Activated T-helper 1 cell treated with anti-CD3 and anti-CD28 coated beads, Interleukin-12 subunit alpha, Interleukin-12 subunit beta, Interleukin-2, Interleukin-4 antibody, amounts not matched to agents 30 ng/mL and 10 ng/mL and 1 ng/mL, durations not matched to agents 14 hours and 24 hours and 36 hours (primary cell): ENCODE measurements at regions of chr12 and their contacts with region 1.

Region 1: DNA sequence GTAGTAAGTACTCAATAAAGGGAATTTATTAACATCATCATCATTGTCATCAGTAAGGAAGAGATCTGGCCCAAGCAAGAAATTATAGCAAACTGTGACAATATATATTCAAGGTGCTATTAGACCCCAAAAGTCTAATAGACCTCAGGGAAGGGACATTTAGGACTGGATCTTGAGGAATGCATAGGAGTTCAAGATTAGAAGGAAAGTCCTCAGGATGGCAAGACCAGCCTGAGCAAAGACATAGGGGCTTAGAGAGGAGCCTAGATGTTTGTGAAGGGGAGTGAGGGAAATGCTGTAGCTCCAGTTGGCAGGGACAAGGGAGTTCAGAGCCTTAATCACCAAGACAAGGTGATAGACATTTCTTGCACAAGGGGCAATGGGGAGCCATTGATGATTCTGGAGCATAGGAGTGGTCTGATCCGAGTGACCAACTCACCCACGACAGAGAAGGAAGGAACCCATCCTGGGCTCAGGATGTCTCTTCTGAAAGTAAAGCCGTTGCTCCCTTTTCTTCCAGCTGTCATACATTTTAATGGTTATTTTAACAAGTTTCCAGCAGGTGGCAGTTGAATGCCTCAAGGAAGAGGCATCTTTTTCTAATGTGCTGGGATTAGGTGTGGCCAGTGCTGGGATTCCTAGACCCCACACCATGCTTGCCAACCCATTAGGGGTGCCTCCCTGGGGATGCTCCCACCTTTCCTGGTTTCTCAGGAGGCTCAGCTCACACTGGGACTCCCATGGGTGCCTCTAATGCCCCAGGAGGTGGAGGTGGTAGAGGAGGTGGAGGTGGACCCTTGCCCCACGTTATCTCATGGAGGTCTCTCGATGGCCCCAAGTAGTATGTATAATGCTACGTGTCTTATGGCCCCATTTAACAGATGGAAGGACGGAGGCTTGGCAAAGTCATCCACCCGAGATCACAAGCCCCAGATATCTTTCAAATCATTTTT is 37.8 kb downstream of the PHETA1 start:
- DNase-seq: no peak
- H3K4me3 Mint-ChIP-seq: no peak overlapping the region
- H3K27ac Mint-ChIP-seq: no peak overlapping the region
- H3K4me1 Mint-ChIP-seq: peaks cover 5% of the 10 kb centered on the region
- H3K27me3 Mint-ChIP-seq: no peaks in the 10 kb centered on the region

Region 2: GRCh38 chr12:111529424-111530368 is 198.6 kb after region 1 on chr12:
- intact Hi-C with region 1: loop called (anchors 1 kb)
- DNase-seq: peak; percentile 47
- H3K4me3 Mint-ChIP-seq: no peak overlapping the region
- H3K27ac Mint-ChIP-seq: peak overlapping the region; percentile 44
- H3K4me1 Mint-ChIP-seq: peaks cover 14% of the 10 kb centered on the region
- H3K27me3 Mint-ChIP-seq: no peaks in the 10 kb centered on the region